H1 (cell line): ENCODE measurements at regions of chr2 and their contacts with region 1.

Region 1: GRCh38 chr2:165401285-165401852 is 68.1 kb upstream of the CSRNP3 start:
- DNase-seq: no peak
- H3K4me3 ChIP-seq: no peak overlapping the region
- H3K27ac ChIP-seq: no peak overlapping the region
- H3K4me1 ChIP-seq: peaks cover 0 to 5% (median 4%) of the 10 kb centered on the region in 4 experiments; a peak in 5 of 7 replicates
- H3K27me3 ChIP-seq: no peaks in the 10 kb centered on the region
- CTCF ChIP-seq: peak in 2 of 3 experiments; percentile 60 to 71; a peak in 2 of 4 replicates
- EP300 ChIP-seq: no peak
- POLR2A ChIP-seq: no peak
- RAD21 ChIP-seq: peak; percentile 84 to 88

Region 2: GRCh38 chr2:165348441-165348840 is 52.9 kb before region 1 on chr2:
- CTCF ChIA-PET with region 1: no interaction called
- POLR2A ChIA-PET with region 1: no interaction called
- DNase-seq: no peak
- H3K4me3 ChIP-seq: no peak overlapping the region
- H3K27ac ChIP-seq: no peak overlapping the region
- H3K4me1 ChIP-seq: no peaks in the 10 kb centered on the region
- H3K27me3 ChIP-seq: no peaks in the 10 kb centered on the region
- CTCF ChIP-seq: no peak
- EP300 ChIP-seq: no peak
- POLR2A ChIP-seq: no peak
- RAD21 ChIP-seq: no peak

Region 3: GRCh38 chr2:165417009-165417408 is 15.6 kb after region 1 on chr2:
- CTCF ChIA-PET with region 1: interaction called, 15 read pairs
- POLR2A ChIA-PET with region 1: interaction called, 3 read pairs
- DNase-seq: no peak
- H3K4me3 ChIP-seq: no peak overlapping the region
- H3K27ac ChIP-seq: no peak overlapping the region
- H3K4me1 ChIP-seq: no peaks in the 10 kb centered on the region
- H3K27me3 ChIP-seq: no peaks in the 10 kb centered on the region
- CTCF ChIP-seq: peak in 2 of 3 experiments; percentile 19 to 41; a peak in 2 of 4 replicates
- EP300 ChIP-seq: no peak
- POLR2A ChIP-seq: no peak
- RAD21 ChIP-seq: 0 out of 4 replicates have a peak, but pooled peaks of 1 of the 2 experiments have one; percentile 15

Region 4: GRCh38 chr2:165479856-165480255 is 78.5 kb after region 1 on chr2:
- CTCF ChIA-PET with region 1: interaction called, 11 read pairs
- POLR2A ChIA-PET with region 1: no interaction called
- DNase-seq: no peak
- H3K4me3 ChIP-seq: no peak overlapping the region
- H3K27ac ChIP-seq: no peak overlapping the region
- H3K4me1 ChIP-seq: no peaks in the 10 kb centered on the region
- H3K27me3 ChIP-seq: no peaks in the 10 kb centered on the region
- CTCF ChIP-seq: no peak
- EP300 ChIP-seq: no peak
- POLR2A ChIP-seq: no peak
- RAD21 ChIP-seq: no peak

Region 5: DNA sequence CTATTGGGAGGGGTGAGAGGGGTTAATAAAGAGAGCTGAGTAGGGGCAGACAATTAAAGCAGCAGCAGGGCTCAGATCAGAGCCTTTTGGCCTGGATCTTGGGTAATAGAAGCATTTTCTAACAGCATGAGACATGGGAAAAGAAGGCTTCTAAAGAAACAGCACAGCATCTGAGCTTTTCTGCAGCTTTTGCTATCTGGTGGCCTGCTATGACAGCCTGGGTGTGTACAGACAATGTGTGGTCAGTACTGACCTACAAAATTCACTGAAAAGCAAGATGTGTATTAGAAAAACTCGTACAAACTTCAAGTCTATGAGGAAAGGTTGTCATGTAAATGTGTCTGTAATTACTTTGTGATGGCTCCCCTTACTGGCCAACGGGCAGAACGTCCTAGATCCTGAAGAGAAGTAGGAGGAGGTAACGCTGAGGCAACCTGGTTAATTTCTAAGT is 297.1 kb after region 1 on chr2:
- CTCF ChIA-PET with region 1: interaction called, 19 read pairs
- POLR2A ChIA-PET with region 1: no interaction called
- DNase-seq: peak in 1 of 2 experiments; percentile 69
- H3K4me3 ChIP-seq: no peak overlapping the region; a peak in 1 of 8 replicates
- H3K27ac ChIP-seq: no peak overlapping the region
- H3K4me1 ChIP-seq: peaks cover 0 to 14% (median 5%) of the 10 kb centered on the region in 4 experiments; a peak in 5 of 7 replicates
- H3K27me3 ChIP-seq: no peaks in the 10 kb centered on the region
- CTCF ChIP-seq: peak; percentile 26 to 67 (median 45)
- EP300 ChIP-seq: no peak
- POLR2A ChIP-seq: no peak
- RAD21 ChIP-seq: peak; percentile 65 to 73